PC-3 (cell line): ENCODE measurements at regions of chr15 and their contacts with region 1.

Region 1: GRCh38 chr15:83837945-83838571 is 184.1 kb downstream of the ADAMTSL3 start:
- DNase-seq: peak; percentile 67
- ATAC-seq: peak; percentile 70
- H3K4me3 ChIP-seq: no peak overlapping the region
- H3K27ac ChIP-seq: no peak overlapping the region
- H3K4me1 ChIP-seq: peaks cover 6% of the 10 kb centered on the region; the same call in 1 of the 2 replicates
- H3K27me3 ChIP-seq: no peaks in the 10 kb centered on the region
- CTCF ChIP-seq: peak; percentile 79

Region 2: GRCh38 chr15:83571820-83572707 is 266.0 kb before region 1 on chr15:
- CTCF ChIA-PET with region 1: no interaction called
- POLR2A ChIA-PET with region 1: interaction called, 3 read pairs
- intact Hi-C with region 1: loop called (anchors 5 kb)
- DNase-seq: peak; percentile 68
- ATAC-seq: no peak
- H3K4me3 ChIP-seq: no peak overlapping the region
- H3K27ac ChIP-seq: no peak overlapping the region
- H3K4me1 ChIP-seq: peaks cover 6% of the 10 kb centered on the region; the same call in 1 of the 2 replicates
- H3K27me3 ChIP-seq: no peaks in the 10 kb centered on the region
- CTCF ChIP-seq: peak; percentile 79

Region 3: DNA sequence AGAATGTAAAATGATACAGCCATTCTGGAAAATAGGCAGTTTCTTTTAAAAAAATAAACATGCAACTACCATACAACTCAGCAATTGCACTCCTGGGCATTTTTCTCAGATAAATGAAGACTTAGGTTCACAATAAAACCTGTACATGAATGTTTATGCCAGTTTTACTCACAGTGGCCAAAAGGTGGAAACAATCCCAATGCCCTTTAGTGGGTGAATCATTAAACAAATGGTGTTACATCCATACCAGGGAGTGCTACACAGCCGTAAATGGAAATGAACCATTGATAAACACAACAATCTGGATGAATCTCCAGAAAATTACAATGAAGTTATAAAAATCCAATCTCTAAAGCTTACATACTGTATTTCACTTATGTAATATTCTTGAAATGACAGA is 43.8 kb before region 1 on chr15:
- CTCF ChIA-PET with region 1: no interaction called
- POLR2A ChIA-PET with region 1: no interaction called
- intact Hi-C with region 1: loop called (anchors 5 kb)
- DNase-seq: peak; percentile 80
- ATAC-seq: peak; percentile 98
- H3K4me3 ChIP-seq: no peak overlapping the region
- H3K27ac ChIP-seq: peak overlapping the region; percentile 39
- H3K4me1 ChIP-seq: peaks cover 13% of the 10 kb centered on the region
- H3K27me3 ChIP-seq: no peaks in the 10 kb centered on the region
- CTCF ChIP-seq: no peak

Region 4: DNA sequence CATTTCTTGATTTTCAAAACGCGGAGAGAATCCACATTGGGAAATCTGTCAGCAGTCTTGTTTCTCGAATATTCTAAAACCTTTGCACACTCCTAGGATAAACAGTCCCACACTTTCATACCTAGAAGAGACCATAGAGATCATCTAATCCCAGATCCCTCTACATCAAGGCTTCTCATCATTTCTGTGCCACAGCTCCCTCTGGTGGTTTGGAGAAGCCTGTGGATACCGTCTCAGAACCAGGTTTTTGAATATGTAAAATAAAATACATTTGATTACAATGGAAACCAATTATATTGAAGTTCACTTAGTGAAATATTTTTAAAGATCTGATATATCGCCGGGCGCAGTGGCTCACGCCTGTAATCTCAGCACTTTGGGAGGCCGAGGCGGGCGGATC is 185.6 kb after region 1 on chr15:
- CTCF ChIA-PET with region 1: no interaction called
- POLR2A ChIA-PET with region 1: no interaction called
- intact Hi-C with region 1: no loop called
- DNase-seq: peak; percentile 73
- ATAC-seq: peak; percentile 37; the same call in 1 of the 2 replicates
- H3K4me3 ChIP-seq: no peak overlapping the region
- H3K27ac ChIP-seq: no peak overlapping the region
- H3K4me1 ChIP-seq: no peaks in the 10 kb centered on the region
- H3K27me3 ChIP-seq: no peaks in the 10 kb centered on the region
- CTCF ChIP-seq: peak; percentile 82

Region 5: DNA sequence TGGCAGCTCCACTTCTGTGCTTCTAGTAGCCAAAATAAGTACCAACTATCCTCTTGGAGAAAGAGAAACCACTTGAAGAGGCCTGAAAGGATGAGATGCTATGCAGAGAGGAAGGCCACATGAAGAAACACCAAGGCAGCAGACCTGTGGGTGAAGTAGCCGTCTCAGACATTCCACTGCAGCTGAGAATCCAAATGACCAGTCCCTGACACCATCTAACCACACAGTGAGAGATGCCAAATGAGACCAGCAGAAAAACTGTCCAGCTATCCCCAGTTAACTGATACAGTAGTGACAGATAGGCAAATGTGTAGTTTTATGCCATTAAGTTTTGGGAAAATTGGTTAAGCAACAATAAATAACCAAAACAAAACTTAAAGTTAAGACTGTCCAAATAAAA is 714.8 kb after region 1 on chr15:
- CTCF ChIA-PET with region 1: no interaction called
- POLR2A ChIA-PET with region 1: no interaction called
- intact Hi-C with region 1: no loop called
- DNase-seq: no peak
- ATAC-seq: no peak
- H3K4me3 ChIP-seq: no peak overlapping the region
- H3K27ac ChIP-seq: no peak overlapping the region
- H3K4me1 ChIP-seq: peaks cover 10% of the 10 kb centered on the region
- H3K27me3 ChIP-seq: no peaks in the 10 kb centered on the region
- CTCF ChIP-seq: no peak